Activated CD4-positive, alpha-beta memory T cell treated with anti-CD3 and anti-CD28 coated beads for 36 hours (primary cell): ENCODE measurements at regions of chrX and their contacts with region 1.

Region 1: GRCh38 chrX:101390664-101391525 is at the start of gene RPL36A:
- DNase-seq: peak; percentile 89
- H3K4me3 Mint-ChIP-seq: peak within 1 kb of the TSS; percentile 94
- H3K27ac Mint-ChIP-seq: peak within 1 kb of the TSS; percentile 96
- H3K4me1 Mint-ChIP-seq: peaks cover 15% of the 10 kb centered on the region
- H3K27me3 Mint-ChIP-seq: no peaks in the 10 kb centered on the region
- total RNA-seq, gene RPL36A: 364 to 420 TPM

Region 2: GRCh38 chrX:100819837-100820666 is 570.8 kb before region 1 on chrX and contains the start of gene CSTF2:
- CTCF ChIA-PET with region 1: no interaction called
- POLR2A ChIA-PET with region 1: no interaction called
- intact Hi-C with region 1: loop called (anchors 2 kb)
- DNase-seq: peak; percentile 87
- H3K4me3 Mint-ChIP-seq: peak within 1 kb of the TSS; percentile 78
- H3K27ac Mint-ChIP-seq: peak within 1 kb of the TSS; percentile 88
- H3K4me1 Mint-ChIP-seq: peaks cover 8% of the 10 kb centered on the region
- H3K27me3 Mint-ChIP-seq: no peaks in the 10 kb centered on the region
- total RNA-seq, gene CSTF2: 41.3 to 42.8 TPM

Region 3: DNA sequence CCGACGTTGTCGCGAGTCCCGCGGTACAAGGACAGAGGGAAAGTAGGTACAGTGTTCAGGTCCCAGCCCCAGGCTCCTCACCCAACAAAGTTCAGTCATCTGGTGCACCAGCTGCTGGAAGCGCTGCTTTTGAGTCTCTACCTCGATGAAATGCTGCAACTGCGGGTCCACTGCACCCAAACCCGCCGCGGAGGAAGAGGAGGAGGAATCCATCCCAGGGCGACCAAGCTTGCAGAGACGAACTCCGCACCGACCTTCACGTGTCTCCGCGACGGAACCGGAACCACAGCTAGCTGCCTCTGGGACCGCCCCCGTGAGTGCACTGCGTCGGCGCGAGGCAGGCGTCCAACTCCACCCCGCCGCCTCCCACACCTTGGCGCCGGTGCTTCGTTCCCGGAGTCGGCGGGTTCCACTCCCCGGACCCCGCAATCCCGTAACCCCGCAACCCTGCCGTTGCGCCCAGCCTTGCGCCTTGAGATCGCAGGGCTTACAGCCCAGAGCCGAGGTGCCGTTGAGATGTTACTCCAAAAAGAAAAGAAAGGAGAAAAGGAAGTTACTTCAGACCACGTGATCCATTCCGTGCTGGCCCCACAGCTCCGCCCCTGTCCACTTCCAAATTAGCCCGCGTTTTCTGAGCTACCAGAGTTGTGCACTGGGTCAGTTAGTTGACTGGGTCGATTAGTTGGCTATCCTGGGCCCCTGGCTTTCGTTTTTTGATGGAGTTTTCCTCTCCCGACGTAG is 42.3 kb before region 1 on chrX and contains the start of gene TIMM8A:
- CTCF ChIA-PET with region 1: interaction called, 11 read pairs
- POLR2A ChIA-PET with region 1: interaction called, 29 read pairs
- intact Hi-C with region 1: loop called (anchors 1 kb)
- DNase-seq: peak; percentile 86
- H3K4me3 Mint-ChIP-seq: peak within 1 kb of the TSS; percentile 91
- H3K27ac Mint-ChIP-seq: peak within 1 kb of the TSS; percentile 92
- H3K4me1 Mint-ChIP-seq: peaks cover 12% of the 10 kb centered on the region
- H3K27me3 Mint-ChIP-seq: no peaks in the 10 kb centered on the region
- total RNA-seq, gene TIMM8A: 21.9 to 23.1 TPM